ENCODE measurements at regions of chr19 and their contacts with region 1.

Region 1: GRCh38 chr19:36139473-36140303 is at the start of gene CAPNS1:
- DNase-seq: peak; percentile 95
- H3K4me3 ChIP-seq: peak within 1 kb of the TSS; percentile 77 to 87 (median 83)
- H3K27ac ChIP-seq: peak within 1 kb of the TSS; percentile 98
- H3K4me1 ChIP-seq: peaks cover 34% of the 10 kb centered on the region
- H3K27me3 ChIP-seq: no peaks in the 10 kb centered on the region
- CTCF ChIP-seq: peak; percentile 5 to 28
- total RNA-seq, gene CAPNS1: 328 to 1,073 TPM

Region 2: DNA sequence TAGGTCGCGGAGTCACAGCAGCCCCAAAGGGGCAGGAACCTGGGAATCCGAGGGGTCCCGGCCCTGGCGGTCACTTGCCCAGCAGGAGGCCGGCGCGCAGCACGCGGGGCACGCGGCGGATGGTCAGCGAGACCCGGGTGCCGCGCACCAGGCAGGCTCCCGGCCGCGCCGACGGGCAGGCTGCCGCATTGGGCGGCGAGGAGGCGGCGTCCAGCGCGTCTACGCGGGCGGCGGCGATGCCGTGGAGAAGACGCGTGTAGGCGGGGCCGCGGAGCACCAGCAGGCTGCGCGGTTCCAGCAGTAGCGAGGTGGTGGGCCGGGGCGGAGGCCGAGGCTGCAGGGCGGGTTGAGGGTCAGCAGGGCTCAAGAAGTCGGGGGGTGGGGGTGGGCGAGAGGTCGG is 130.5 kb before region 1 on chr19:
- CTCF ChIA-PET with region 1: no interaction called
- dilution Hi-C with region 1: loop called (anchors 10 kb)
- in situ Hi-C with region 1: no loop called
- intact Hi-C with region 1: no loop called
- DNase-seq: no peak
- H3K4me3 ChIP-seq: peak overlapping the region; percentile 33 to 44 (median 33)
- H3K27ac ChIP-seq: no peak overlapping the region
- H3K4me1 ChIP-seq: peaks cover 10% of the 10 kb centered on the region
- H3K27me3 ChIP-seq: no peaks in the 10 kb centered on the region
- CTCF ChIP-seq: peak in 1 of 2 donors; percentile 7

Region 3: DNA sequence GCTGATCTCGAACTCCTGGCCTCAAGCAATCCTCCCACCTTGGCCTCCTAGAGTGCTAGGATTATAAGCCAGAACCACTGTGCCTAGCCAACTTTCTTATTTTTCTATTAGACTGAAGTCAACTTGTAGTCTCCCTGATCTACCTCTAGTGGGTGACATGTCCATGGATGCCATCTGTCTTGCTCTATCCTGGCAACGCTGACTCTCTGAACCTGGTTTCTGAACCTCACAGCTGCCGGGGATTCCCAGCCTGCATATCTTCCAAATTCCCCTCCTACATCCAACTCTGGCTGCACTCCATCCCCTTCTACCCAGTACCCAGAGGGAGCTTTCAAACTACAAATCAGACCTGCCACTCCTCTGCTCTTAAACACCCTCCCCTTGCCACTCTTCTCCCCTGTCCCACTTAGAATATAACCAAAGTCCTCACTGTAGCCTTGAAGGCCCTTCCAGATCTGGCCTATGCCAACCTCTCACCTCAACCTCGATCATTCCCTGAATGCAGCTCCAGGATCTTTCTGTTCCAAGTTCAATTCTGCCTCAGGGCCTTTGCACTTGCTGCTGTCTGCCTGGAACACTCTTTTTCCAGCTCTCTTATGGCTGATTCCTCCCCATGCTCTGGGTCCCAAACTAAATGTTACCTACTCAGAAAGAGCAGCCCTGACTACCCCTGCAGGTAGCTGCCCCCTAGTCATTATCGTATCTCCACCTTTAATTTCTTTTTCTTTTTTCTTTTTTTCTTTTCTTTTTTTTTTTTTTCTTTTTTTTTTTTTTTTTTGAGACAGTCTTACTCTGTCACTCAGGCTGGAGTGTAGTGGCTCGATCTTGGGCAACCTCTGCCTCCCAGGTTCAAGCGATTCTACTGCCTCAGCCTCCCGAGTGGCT is 109.2 kb before region 1 on chr19:
- CTCF ChIA-PET with region 1: no interaction called
- dilution Hi-C with region 1: no loop called
- in situ Hi-C with region 1: no loop called
- intact Hi-C with region 1: no loop called
- DNase-seq: peak; percentile 53
- H3K4me3 ChIP-seq: no peak overlapping the region
- H3K27ac ChIP-seq: no peak overlapping the region
- H3K4me1 ChIP-seq: no peaks in the 10 kb centered on the region
- H3K27me3 ChIP-seq: no peaks in the 10 kb centered on the region
- CTCF ChIP-seq: peak; percentile 33 to 70

Region 4: GRCh38 chr19:36169084-36169760 is 29.5 kb after region 1 on chr19:
- CTCF ChIA-PET with region 1: no interaction called
- dilution Hi-C with region 1: no loop called
- in situ Hi-C with region 1: loop called in 1 of 2 experiments (anchors 5 kb)
- intact Hi-C with region 1: loop called (anchors 1 kb)
- DNase-seq: no peak
- H3K4me3 ChIP-seq: no peak overlapping the region
- H3K27ac ChIP-seq: no peak overlapping the region
- H3K4me1 ChIP-seq: no peaks in the 10 kb centered on the region
- H3K27me3 ChIP-seq: no peaks in the 10 kb centered on the region
- CTCF ChIP-seq: no peak